Left cardiac atrium (tissue), 4 donors: ENCODE measurements at regions of chr12 and their contacts with region 1.

Region 1: DNA sequence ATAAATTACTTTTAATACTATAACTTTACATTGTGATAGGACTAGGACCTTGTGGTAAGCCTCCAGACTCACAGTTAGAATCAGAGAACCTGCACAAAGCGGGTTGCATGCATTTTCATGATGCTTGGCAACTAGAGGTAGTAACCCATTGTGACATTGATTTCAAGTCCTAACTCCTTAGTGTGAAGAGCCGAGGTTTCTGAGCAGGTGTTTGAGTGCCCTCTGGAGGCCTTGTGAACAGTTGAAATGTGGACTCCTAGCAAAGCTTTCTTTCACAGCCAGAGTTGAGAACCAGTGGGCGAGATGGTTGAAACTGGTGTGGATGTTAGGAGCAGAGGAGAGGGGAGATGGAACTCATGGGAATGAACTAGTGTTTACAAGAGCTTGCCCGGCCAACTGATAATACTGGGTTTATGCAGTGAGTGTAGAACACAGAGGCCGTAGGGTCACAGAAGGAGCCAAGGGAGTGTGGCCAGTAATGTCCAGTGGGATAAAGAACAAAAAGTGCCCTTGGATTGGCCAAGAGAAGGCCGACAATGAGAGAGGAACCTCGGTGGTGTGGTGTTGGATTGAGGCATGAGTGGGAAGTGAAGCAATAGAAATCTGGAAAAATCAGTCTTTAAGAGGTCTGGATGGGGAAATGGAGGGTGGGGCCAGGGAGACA is 10.9 kb downstream of the ZNF664 start:
- DNase-seq: no peak
- ATAC-seq: peak; percentile 80 to 88

Region 2: DNA sequence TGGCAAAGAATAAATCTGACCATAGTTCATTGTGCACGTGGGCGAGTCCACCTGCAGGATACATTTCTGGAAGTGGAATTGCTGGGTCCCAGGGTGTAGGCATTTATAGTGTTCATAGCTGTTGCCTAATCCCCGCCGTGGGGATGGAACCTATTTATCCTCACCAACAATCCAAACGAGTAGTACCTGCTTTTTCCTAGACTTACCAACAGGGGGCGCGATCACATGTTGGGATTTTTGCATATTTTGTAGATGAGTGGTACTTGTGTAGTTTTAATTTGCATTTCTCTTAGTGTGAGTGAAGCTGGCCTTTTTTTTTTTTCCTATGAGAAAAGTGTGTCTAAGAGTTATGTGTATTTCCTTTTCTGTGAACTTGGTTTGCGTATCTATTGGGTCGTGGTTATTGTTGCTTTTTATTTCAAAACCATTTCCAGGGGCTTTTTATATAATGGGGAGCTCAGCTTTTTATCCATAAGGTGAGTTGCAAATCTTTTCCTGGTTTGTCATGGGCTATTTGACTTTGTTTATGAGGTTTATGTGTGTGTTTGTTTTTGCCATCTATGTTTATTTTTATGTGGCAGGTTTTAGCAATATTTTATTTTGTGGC is 78.5 kb before region 1 on chr12:
- intact Hi-C with region 1: loop called (anchors 5 to 10 kb)
- DNase-seq: peak; percentile 49
- ATAC-seq: peak; percentile 40 to 45

Region 3: GRCh38 chr12:124140944-124141486 is 157.1 kb after region 1 on chr12:
- intact Hi-C with region 1: no loop called
- DNase-seq: no peak
- ATAC-seq: no peak